ENCODE measurements at regions of chr5 and their contacts with region 1.

Region 1: DNA sequence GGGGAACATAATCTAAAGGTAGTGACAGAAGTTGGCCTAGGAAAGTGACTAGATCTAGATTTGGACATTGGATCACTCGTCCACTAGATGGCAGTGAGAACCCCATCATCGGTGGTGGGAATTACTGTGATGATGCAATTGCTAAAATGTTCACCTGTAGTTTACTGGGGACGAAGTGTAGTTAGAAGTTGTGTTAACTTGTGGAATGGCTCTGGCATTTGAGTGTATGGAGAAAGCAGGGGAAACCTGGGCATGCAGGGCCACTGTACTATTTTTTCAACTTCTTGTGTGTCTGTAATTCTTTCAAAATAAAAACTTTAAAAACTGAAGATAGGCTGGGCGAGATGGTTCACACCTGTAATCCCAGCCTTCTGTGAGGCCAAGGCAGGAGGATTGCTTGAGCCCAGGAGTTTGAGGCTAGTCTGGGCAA is 75.5 kb downstream of the PHAX start:
- DNase-seq: peak; percentile 90
- H3K4me3 Mint-ChIP-seq: no peak overlapping the region
- H3K27ac Mint-ChIP-seq: no peak overlapping the region
- H3K4me1 Mint-ChIP-seq: peaks cover 22% of the 10 kb centered on the region
- H3K27me3 Mint-ChIP-seq: no peaks in the 10 kb centered on the region
- CTCF ChIP-seq: peak; percentile 95

Region 2: GRCh38 chr5:126339215-126339805 is 336.9 kb before region 1 on chr5:
- CTCF ChIA-PET with region 1: interaction called, 4 read pairs
- POLR2A ChIA-PET with region 1: no interaction called
- intact Hi-C with region 1: loop called (anchors 10 kb)
- DNase-seq: peak; percentile 86
- H3K4me3 Mint-ChIP-seq: no peak overlapping the region
- H3K27ac Mint-ChIP-seq: no peak overlapping the region
- H3K4me1 Mint-ChIP-seq: peaks cover 5% of the 10 kb centered on the region
- H3K27me3 Mint-ChIP-seq: no peaks in the 10 kb centered on the region
- CTCF ChIP-seq: peak; percentile 85

Region 3: DNA sequence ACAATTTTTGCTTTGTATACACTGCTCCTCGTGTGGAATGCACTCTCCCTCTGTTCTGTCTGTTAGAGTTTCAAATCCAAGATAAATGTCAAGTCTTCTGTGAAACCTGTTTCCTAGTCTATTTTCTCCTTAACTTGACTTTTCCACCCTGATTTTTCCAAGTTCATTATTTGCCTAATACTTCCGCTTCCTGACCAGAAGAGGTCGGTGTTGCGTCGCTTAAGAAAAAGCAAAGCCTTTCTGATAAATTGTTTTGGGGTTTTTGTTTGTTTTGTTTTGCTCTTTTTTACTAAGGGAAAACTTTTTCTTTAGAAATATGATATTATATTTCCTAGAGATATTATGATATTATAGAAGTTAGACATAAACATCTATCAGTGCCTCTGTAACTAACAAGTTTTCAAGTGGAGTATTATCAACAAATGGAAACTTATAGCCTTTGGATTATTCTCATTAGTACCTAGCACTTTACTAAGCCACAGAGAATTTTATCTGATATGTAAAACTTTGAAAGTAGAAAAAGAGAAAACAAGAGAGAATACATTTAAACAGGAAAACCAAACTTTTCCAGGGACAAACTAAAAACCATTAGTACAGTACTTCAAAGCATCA is 19.7 kb before region 1 on chr5:
- CTCF ChIA-PET with region 1: interaction called, 80 read pairs
- POLR2A ChIA-PET with region 1: no interaction called
- intact Hi-C with region 1: no loop called
- DNase-seq: peak; percentile 67
- H3K4me3 Mint-ChIP-seq: no peak overlapping the region
- H3K27ac Mint-ChIP-seq: no peak overlapping the region
- H3K4me1 Mint-ChIP-seq: no peaks in the 10 kb centered on the region
- H3K27me3 Mint-ChIP-seq: no peaks in the 10 kb centered on the region
- CTCF ChIP-seq: peak; percentile 98

Region 4: GRCh38 chr5:126686451-126687126 is 10.4 kb after region 1 on chr5:
- CTCF ChIA-PET with region 1: interaction called, 27 read pairs
- POLR2A ChIA-PET with region 1: no interaction called
- intact Hi-C with region 1: no loop called
- DNase-seq: no peak
- H3K4me3 Mint-ChIP-seq: no peak overlapping the region
- H3K27ac Mint-ChIP-seq: no peak overlapping the region
- H3K4me1 Mint-ChIP-seq: no peaks in the 10 kb centered on the region
- H3K27me3 Mint-ChIP-seq: no peaks in the 10 kb centered on the region
- CTCF ChIP-seq: no peak

Region 5: GRCh38 chr5:126776497-126777256 is 100.5 kb after region 1 on chr5 and contains the start of gene LMNB1:
- CTCF ChIA-PET with region 1: interaction called, 456 read pairs
- POLR2A ChIA-PET with region 1: interaction called, 137 read pairs
- intact Hi-C with region 1: loop called (anchors 1 kb)
- DNase-seq: peak; percentile 98
- H3K4me3 Mint-ChIP-seq: peak within 1 kb of the TSS; percentile 100
- H3K27ac Mint-ChIP-seq: peak within 1 kb of the TSS; percentile 95
- H3K4me1 Mint-ChIP-seq: peaks cover 6% of the 10 kb centered on the region
- H3K27me3 Mint-ChIP-seq: no peaks in the 10 kb centered on the region
- CTCF ChIP-seq: no peak
- total RNA-seq, gene LMNB1: 19.6 and 31.6 TPM in 2 replicates

Region 6: DNA sequence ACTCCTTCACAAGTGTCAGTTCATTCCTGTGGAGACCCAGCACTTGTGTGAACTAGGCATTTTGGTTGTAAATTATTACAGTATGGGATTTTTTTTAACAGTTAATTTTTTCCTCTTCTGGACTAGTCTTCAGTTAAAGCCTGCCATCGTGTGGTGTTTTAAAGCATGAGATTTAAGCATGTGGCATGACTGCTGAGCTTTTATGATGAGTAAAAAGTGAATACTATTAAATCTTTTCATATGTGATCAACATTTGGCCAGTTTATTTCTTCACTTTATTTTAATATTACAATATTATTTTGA is 125.7 kb after region 1 on chr5:
- CTCF ChIA-PET with region 1: interaction called, 158 read pairs
- POLR2A ChIA-PET with region 1: interaction called, 11 read pairs
- intact Hi-C with region 1: loop called (anchors 1 kb)
- DNase-seq: peak; percentile 67
- H3K4me3 Mint-ChIP-seq: peak overlapping the region; percentile 15
- H3K27ac Mint-ChIP-seq: peak overlapping the region; percentile 37
- H3K4me1 Mint-ChIP-seq: peaks cover 35% of the 10 kb centered on the region
- H3K27me3 Mint-ChIP-seq: no peaks in the 10 kb centered on the region
- CTCF ChIP-seq: peak; percentile 70

Region 7: DNA sequence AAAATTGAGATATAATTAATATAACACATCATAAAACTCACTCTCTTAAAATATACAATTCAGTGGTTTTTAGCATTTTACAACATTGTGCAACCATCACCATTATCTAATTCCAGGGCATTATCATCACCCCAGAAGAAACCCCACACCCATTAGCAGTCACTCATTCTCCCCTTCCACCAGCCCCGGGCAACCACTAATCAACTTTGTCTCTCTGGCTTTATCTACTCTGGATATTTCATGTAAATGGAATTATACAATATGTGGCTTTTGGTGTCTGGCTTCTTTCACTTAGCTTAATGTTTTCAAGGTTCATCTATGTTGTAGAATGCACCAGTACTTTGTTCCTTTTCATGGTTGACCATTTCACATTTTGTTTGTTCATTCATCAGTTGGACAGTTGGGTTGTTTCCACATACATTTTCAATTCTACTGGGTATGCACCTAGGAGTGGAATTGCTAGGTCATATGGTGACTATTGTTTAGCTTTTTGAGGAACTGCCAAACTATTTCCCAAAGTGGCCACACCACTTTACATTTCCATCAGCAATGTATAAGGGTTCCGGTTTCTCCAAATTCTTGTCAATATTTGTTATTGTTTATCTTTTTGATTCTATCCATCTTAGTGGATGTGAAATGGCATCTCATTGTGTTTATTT is 291.7 kb after region 1 on chr5:
- CTCF ChIA-PET with region 1: no interaction called
- POLR2A ChIA-PET with region 1: no interaction called
- intact Hi-C with region 1: no loop called
- DNase-seq: no peak
- H3K4me3 Mint-ChIP-seq: no peak overlapping the region
- H3K27ac Mint-ChIP-seq: no peak overlapping the region
- H3K4me1 Mint-ChIP-seq: peaks cover 41% of the 10 kb centered on the region
- H3K27me3 Mint-ChIP-seq: no peaks in the 10 kb centered on the region
- CTCF ChIP-seq: no peak

Region 8: GRCh38 chr5:127441799-127442484 is 765.7 kb after region 1 on chr5:
- CTCF ChIA-PET with region 1: interaction called, 5 read pairs
- POLR2A ChIA-PET with region 1: no interaction called
- intact Hi-C with region 1: loop called (anchors 5 kb)
- DNase-seq: peak; percentile 43
- H3K4me3 Mint-ChIP-seq: no peak overlapping the region
- H3K27ac Mint-ChIP-seq: no peak overlapping the region
- H3K4me1 Mint-ChIP-seq: no peaks in the 10 kb centered on the region
- H3K27me3 Mint-ChIP-seq: peaks cover 12% of the 10 kb centered on the region
- CTCF ChIP-seq: peak; percentile 55

Region 9: GRCh38 chr5:127666043-127666716 is 990.0 kb after region 1 on chr5:
- CTCF ChIA-PET with region 1: no interaction called
- POLR2A ChIA-PET with region 1: no interaction called
- intact Hi-C with region 1: no loop called
- DNase-seq: no peak
- H3K4me3 Mint-ChIP-seq: no peak overlapping the region
- H3K27ac Mint-ChIP-seq: no peak overlapping the region
- H3K4me1 Mint-ChIP-seq: no peaks in the 10 kb centered on the region
- H3K27me3 Mint-ChIP-seq: no peaks in the 10 kb centered on the region
- CTCF ChIP-seq: no peak